ENCODE measurements at regions of chr17 and their contacts with region 1.

Region 1: GRCh38 chr17:43360739-43361505 is 37.9 kb upstream of the ARL4D start:
- DNase-seq: peak; percentile 72 to 97 (median 94)
- ATAC-seq: peak; percentile 84
- H3K4me3 Mint-ChIP-seq: peak overlapping the region; percentile 85 to 96 (median 94)
- H3K27ac Mint-ChIP-seq: peak overlapping the region; percentile 98 to 100 (median 100)
- H3K4me1 Mint-ChIP-seq: peaks cover 31 to 56% (median 50%) of the 10 kb centered on the region in 4 donors
- H3K27me3 Mint-ChIP-seq: peaks cover 0 to 4% (median 0%) of the 10 kb centered on the region in 5 donors

Region 2: GRCh38 chr17:42997984-42998938 is 362.7 kb before region 1 on chr17 and contains the start of gene RPL27:
- POLR2A ChIA-PET with region 1: interaction called, 44 read pairs
- DNase-seq: peak; percentile 86 to 99 (median 98)
- ATAC-seq: peak; percentile 94 to 95
- H3K4me3 Mint-ChIP-seq: peak within 1 kb of the TSS; percentile 93 to 98 (median 96)
- H3K27ac Mint-ChIP-seq: peak within 1 kb of the TSS; percentile 91 to 100 (median 99)
- H3K4me1 Mint-ChIP-seq: peaks cover 16 to 35% (median 27%) of the 10 kb centered on the region in 4 donors
- H3K27me3 Mint-ChIP-seq: no peaks in the 10 kb centered on the region
- polyA plus RNA-seq, gene RPL27: 2,416 to 2,846 (median 2,434) TPM

Region 3: GRCh38 chr17:43024407-43025289 is 336.3 kb before region 1 on chr17 and contains the start of gene RND2:
- POLR2A ChIA-PET with region 1: interaction called, 12 read pairs
- DNase-seq: peak; percentile 72 to 93 (median 78)
- ATAC-seq: peak; percentile 66
- H3K4me3 Mint-ChIP-seq: peak within 1 kb of the TSS; percentile 84 to 95 (median 92)
- H3K27ac Mint-ChIP-seq: peak within 1 kb of the TSS; percentile 85 to 96 (median 94)
- H3K4me1 Mint-ChIP-seq: peaks cover 18 to 38% (median 27%) of the 10 kb centered on the region in 4 donors
- H3K27me3 Mint-ChIP-seq: no peaks in the 10 kb centered on the region
- polyA plus RNA-seq, gene RND2: 0.08 to 0.09 TPM in 2 of 3 donors, not detected in the other

Region 4: GRCh38 chr17:43211480-43212402 is 149.2 kb before region 1 on chr17 and contains the start of gene TMEM106A:
- POLR2A ChIA-PET with region 1: interaction called, 25 read pairs
- DNase-seq: peak; percentile 54 to 85 (median 66)
- ATAC-seq: peak; percentile 88 to 90
- H3K4me3 Mint-ChIP-seq: peak within 1 kb of the TSS; percentile 88 to 100 (median 99)
- H3K27ac Mint-ChIP-seq: peak within 1 kb of the TSS; percentile 95 to 99 (median 97)
- H3K4me1 Mint-ChIP-seq: peaks cover 24 to 45% (median 41%) of the 10 kb centered on the region in 4 donors
- H3K27me3 Mint-ChIP-seq: no peaks in the 10 kb centered on the region
- polyA plus RNA-seq, gene TMEM106A: 4.1 to 5.5 (median 4.2) TPM

Region 5: GRCh38 chr17:43316522-43317142 is 44.3 kb before region 1 on chr17:
- POLR2A ChIA-PET with region 1: interaction called, 160 read pairs
- DNase-seq: peak in 3 of 10 donors; percentile 8 to 36 (median 31)
- ATAC-seq: no peak
- H3K4me3 Mint-ChIP-seq: peak overlapping the region in 4 of 10 donors; percentile 7 to 64 (median 51)
- H3K27ac Mint-ChIP-seq: peak overlapping the region in 8 of 10 donors; percentile 6 to 84 (median 58)
- H3K4me1 Mint-ChIP-seq: peaks cover 5 to 16% (median 13%) of the 10 kb centered on the region in 4 donors
- H3K27me3 Mint-ChIP-seq: no peaks in the 10 kb centered on the region

Region 6: DNA sequence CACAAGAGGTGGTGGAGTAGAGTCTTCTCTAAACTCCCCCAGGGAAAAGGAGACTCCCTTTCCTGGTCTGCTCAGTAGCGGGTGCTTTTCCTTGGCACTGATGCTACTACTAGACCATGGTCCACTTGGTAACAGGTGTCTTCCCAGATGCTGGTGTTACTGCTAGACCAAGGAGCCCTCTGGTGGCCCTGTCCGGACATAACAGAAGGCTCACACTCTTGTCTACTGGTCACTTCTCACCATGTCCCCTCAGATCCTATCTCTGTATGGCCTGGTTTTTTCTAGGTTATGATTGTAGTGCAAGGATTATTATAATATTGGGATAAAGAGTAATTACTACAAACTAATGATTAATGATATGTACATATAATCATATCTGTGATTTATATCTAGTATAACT is 11.8 kb before region 1 on chr17:
- POLR2A ChIA-PET with region 1: interaction called, 19 read pairs
- DNase-seq: no peak
- ATAC-seq: no peak
- H3K4me3 Mint-ChIP-seq: no peak overlapping the region
- H3K27ac Mint-ChIP-seq: no peak overlapping the region
- H3K4me1 Mint-ChIP-seq: peaks cover 0 to 10% (median under 1%) of the 10 kb centered on the region in 4 donors
- H3K27me3 Mint-ChIP-seq: no peaks in the 10 kb centered on the region

Region 7: GRCh38 chr17:43393944-43394482 is 33.1 kb after region 1 on chr17:
- POLR2A ChIA-PET with region 1: interaction called, 755 read pairs
- DNase-seq: peak; percentile 75 to 95 (median 88)
- ATAC-seq: peak; percentile 30
- H3K4me3 Mint-ChIP-seq: peak overlapping the region in 3 of 10 donors; percentile 3 to 12 (median 8)
- H3K27ac Mint-ChIP-seq: peak overlapping the region in 8 of 10 donors; percentile 40 to 79 (median 57)
- H3K4me1 Mint-ChIP-seq: peaks cover 13 to 44% (median 27%) of the 10 kb centered on the region in 4 donors
- H3K27me3 Mint-ChIP-seq: no peaks in the 10 kb centered on the region